ENCODE measurements at regions of chr19 and their contacts with region 1.

Region 1: DNA sequence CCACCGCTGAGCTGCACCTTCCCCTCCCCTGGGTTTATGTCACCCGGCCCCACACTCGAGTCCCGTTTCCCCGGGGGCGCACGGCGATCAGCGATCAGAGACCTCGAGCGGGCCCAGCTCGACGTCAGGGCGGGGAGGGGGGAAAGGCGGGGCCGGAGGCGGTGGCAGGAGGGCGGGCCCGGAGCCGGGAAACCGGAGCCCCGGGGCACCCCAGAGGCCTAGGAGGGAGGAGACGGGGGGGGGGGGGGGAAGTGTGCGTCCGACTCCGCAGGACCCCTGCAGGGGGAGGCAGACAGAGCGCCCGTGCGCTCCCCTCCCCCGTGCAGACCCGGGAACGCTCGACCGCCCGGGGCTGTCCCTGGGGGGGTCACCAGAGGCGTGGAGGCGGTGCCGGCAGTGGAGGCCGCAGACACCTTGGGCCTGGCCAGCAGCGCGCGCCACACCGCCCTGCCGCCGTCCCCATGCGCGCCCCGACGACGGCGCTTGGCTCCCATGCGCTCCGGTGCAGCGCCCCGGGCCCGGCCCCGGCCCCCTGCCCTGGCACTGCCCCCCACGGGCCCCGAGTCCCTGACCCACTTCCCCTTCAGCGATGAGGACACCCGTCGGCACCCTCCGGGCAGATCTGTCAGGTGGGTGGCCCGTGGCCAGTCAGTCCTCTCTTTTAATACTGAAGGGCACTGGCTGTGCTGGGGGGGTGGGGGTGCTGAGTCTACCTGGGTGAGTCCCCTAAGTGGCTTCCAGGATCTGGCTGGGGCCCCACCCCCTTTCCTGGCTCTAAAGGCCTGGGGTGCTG is 11.8 kb downstream of the PDE4A start:
- DNase-seq: peak in 8 of 9 donors; percentile 44 to 64 (median 54)
- ATAC-seq: peak; percentile 58
- H3K4me3 ChIP-seq: peak overlapping the region; percentile 50
- H3K4me3 Mint-ChIP-seq: peak overlapping the region; percentile 82 to 94 (median 88)
- H3K27ac ChIP-seq: peak overlapping the region; percentile 46
- H3K27ac Mint-ChIP-seq: peak overlapping the region in 7 of 9 donors; percentile 26 to 95 (median 82)
- H3K4me1 ChIP-seq: peaks cover 19 to 33% of the 10 kb centered on the region in 2 donors
- H3K4me1 Mint-ChIP-seq: peaks cover 22 to 69% (median 33%) of the 10 kb centered on the region in 7 donors
- H3K27me3 ChIP-seq: peaks cover 0 to 9% of the 10 kb centered on the region in 2 donors
- H3K27me3 Mint-ChIP-seq: peaks cover 22 to 38% (median 31%) of the 10 kb centered on the region in 5 donors

Region 2: GRCh38 chr19:10416380-10417257 is 15.5 kb before region 1 on chr19:
- CTCF ChIA-PET with region 1: interaction called, 8 read pairs
- POLR2A ChIA-PET with region 1: interaction called, 3 read pairs
- intact Hi-C with region 1: loop called (anchors 1 kb)
- DNase-seq: peak; percentile 93 to 99 (median 97)
- ATAC-seq: peak; percentile 91
- H3K4me3 ChIP-seq: peak overlapping the region; percentile 43
- H3K4me3 Mint-ChIP-seq: peak overlapping the region; percentile 63 to 92 (median 77)
- H3K27ac ChIP-seq: peak overlapping the region; percentile 55
- H3K27ac Mint-ChIP-seq: peak overlapping the region; percentile 75 to 98 (median 97)
- H3K4me1 ChIP-seq: peaks cover 41 to 53% of the 10 kb centered on the region in 2 donors
- H3K4me1 Mint-ChIP-seq: peaks cover 20 to 59% (median 43%) of the 10 kb centered on the region in 7 donors
- H3K27me3 ChIP-seq: peaks cover 18 to 29% of the 10 kb centered on the region in 2 donors
- H3K27me3 Mint-ChIP-seq: peaks cover 25 to 33% (median 26%) of the 10 kb centered on the region in 5 donors

Region 3: GRCh38 chr19:12350890-12351197 is 1918.7 kb after region 1 on chr19:
- CTCF ChIA-PET with region 1: no interaction called
- POLR2A ChIA-PET with region 1: no interaction called
- intact Hi-C with region 1: no loop called
- DNase-seq: no peak
- ATAC-seq: no peak
- H3K4me3 ChIP-seq: no peak overlapping the region
- H3K4me3 Mint-ChIP-seq: no peak overlapping the region
- H3K27ac ChIP-seq: no peak overlapping the region
- H3K27ac Mint-ChIP-seq: no peak overlapping the region
- H3K4me1 ChIP-seq: no peaks in the 10 kb centered on the region
- H3K4me1 Mint-ChIP-seq: peaks cover 0 to 2% (median 0%) of the 10 kb centered on the region in 7 donors
- H3K27me3 ChIP-seq: no peaks in the 10 kb centered on the region
- H3K27me3 Mint-ChIP-seq: no peaks in the 10 kb centered on the region

Measured in naive thymus-derived CD4-positive, alpha-beta T cell (primary cell).